Activated CD4-positive, alpha-beta memory T cell treated with anti-CD3 and anti-CD28 coated beads, Interleukin-2, amount 10 ng/mL, durations not matched to agents 7 days and 5 days (primary cell): ENCODE measurements at regions of chr6 and their contacts with region 1.

Region 1: DNA sequence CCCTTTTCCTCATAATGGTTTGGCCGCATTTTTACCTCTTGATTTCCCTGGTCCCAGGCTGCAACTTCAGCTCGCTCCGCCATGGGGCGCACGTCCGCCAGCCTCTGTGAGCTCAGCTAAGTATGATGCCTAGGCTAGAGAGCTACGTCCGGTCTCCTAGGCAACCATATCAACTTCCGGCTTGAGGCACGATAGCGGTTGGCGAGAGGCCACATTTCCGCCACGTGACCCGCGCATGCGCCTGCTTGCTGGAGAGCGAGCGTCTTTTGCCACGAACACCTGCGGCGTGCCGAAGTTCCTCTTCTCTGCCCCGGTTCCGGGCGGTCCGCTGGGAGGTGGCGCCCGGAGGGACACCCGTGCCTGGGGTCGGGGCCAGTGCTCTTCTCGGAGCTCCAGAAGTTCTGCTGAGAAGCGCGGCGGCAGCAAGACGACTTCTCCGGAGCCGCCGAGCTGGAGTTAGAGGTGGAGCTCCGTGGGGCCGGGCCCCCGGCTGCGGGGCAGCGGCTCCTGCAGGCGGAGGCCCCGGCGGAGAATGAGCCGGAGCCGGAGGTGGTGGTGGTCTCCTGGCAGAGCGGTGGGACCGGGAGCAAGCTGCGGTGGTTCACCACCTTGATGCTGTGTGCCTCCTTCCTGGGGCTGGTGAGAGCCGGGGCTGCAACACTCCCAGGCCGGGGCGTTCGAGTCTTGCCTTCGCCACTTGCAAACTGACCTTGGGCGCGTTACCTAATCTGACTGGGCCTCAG is 172.0 kb downstream of the SLC16A10 start:
- DNase-seq: peak; percentile 99
- H3K4me3 Mint-ChIP-seq: peak overlapping the region; percentile 76
- H3K27ac Mint-ChIP-seq: peak overlapping the region; percentile 73
- H3K4me1 Mint-ChIP-seq: peaks cover 31% of the 10 kb centered on the region
- H3K27me3 Mint-ChIP-seq: peaks cover 18% of the 10 kb centered on the region

Region 2: DNA sequence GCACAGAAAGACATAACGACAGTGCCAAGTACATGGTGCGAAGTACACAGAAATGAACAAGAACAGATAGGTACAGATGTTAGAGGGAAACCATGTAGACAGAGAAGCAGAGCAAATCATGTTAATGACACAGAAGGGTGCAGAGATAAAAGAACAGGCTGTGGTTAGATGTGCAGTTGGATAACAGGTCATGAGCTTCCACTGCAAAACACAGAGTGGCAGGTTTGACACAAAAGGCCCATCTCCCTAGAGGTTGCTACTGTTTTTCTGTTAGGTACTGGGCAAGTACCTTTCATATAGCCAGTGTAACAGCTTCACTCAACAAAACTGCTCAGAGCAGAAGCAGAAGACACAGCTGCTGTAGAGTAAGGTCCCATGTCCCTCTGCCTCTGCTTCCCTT is 1652.9 kb before region 1 on chr6:
- CTCF ChIA-PET with region 1: no interaction called
- POLR2A ChIA-PET with region 1: no interaction called
- DNase-seq: no peak
- H3K4me3 Mint-ChIP-seq: no peak overlapping the region
- H3K27ac Mint-ChIP-seq: no peak overlapping the region
- H3K4me1 Mint-ChIP-seq: peaks cover 5% of the 10 kb centered on the region
- H3K27me3 Mint-ChIP-seq: peaks cover 1% of the 10 kb centered on the region

Region 3: GRCh38 chr6:111011360-111012142 is 247.7 kb before region 1 on chr6:
- CTCF ChIA-PET with region 1: interaction called, 13 read pairs
- POLR2A ChIA-PET with region 1: no interaction called
- DNase-seq: no peak
- H3K4me3 Mint-ChIP-seq: no peak overlapping the region
- H3K27ac Mint-ChIP-seq: peak overlapping the region; percentile 7
- H3K4me1 Mint-ChIP-seq: peaks cover 4% of the 10 kb centered on the region
- H3K27me3 Mint-ChIP-seq: no peaks in the 10 kb centered on the region

Region 4: DNA sequence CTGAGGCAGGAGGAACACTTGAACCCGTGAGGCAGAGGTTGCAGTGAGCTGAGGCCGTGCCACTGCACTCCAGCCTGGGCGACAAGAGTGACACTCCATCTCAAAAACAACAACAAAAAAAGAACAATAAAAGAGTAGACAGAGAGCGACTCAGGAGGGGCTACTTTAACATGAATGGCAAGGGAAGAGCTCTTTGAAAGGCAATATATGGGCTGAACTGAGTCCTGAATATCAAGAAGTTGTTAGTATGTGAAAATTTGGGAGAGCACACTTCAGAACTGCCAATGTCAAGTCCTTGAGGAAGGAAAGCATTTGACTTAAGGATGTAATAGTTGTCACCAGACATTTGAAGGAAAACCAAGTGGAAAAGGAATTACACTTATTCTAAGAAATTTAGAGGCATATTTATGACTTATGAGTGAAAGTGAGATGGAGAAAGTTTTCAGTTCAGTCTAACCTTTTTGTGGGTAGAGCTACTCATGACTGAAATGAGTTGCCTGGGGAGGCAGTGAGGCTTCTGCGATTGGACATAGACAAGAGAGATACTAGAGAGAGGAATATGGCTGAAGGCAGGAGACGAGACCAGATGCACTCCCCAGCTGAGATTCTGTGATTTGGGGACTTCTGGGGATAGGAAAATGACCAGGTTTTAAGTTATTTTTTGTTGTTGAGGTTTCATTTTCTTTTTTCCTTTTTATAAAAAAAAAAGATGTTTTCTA is 220.6 kb before region 1 on chr6:
- CTCF ChIA-PET with region 1: no interaction called
- POLR2A ChIA-PET with region 1: no interaction called
- DNase-seq: no peak
- H3K4me3 Mint-ChIP-seq: no peak overlapping the region
- H3K27ac Mint-ChIP-seq: no peak overlapping the region
- H3K4me1 Mint-ChIP-seq: peaks cover 5% of the 10 kb centered on the region
- H3K27me3 Mint-ChIP-seq: peaks cover 7% of the 10 kb centered on the region

Region 5: DNA sequence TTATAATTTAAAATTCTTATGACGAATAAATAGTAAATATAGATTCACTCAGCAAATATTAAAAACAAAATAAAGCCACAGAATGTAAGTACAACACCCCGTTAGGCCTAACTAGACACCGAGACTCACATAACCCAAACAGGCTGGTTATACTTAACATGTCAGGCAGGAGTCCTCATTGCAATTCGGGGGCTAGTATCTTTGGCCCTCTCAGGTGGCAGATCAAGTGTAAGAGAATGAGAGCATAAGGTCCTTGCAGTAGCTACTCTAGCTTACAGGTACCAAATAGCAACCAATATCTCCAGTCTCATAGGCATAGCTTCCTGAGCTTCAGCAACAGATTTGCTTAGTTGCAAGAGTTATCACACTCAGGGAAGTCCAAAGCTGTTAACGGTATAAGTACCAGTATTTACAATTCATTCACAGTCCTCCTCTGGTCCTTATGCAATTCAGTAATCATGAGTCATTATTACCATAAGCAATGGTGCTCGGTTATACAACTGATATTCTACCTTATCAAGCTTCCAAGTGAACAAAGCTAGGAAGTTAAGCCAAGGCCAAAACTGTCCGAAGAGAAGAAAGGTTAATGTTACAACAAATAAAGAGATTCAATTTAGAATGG is 203.6 kb after region 1 on chr6:
- CTCF ChIA-PET with region 1: interaction called, 13 read pairs
- POLR2A ChIA-PET with region 1: interaction called, 5 read pairs
- DNase-seq: no peak
- H3K4me3 Mint-ChIP-seq: no peak overlapping the region
- H3K27ac Mint-ChIP-seq: no peak overlapping the region
- H3K4me1 Mint-ChIP-seq: peaks cover 16% of the 10 kb centered on the region
- H3K27me3 Mint-ChIP-seq: no peaks in the 10 kb centered on the region

Region 6: GRCh38 chr6:111483736-111484632 is 224.7 kb after region 1 on chr6:
- CTCF ChIA-PET with region 1: interaction called, 101 read pairs
- POLR2A ChIA-PET with region 1: interaction called, 40 read pairs
- DNase-seq: peak; percentile 88
- H3K4me3 Mint-ChIP-seq: peak overlapping the region; percentile 95
- H3K27ac Mint-ChIP-seq: peak overlapping the region; percentile 96
- H3K4me1 Mint-ChIP-seq: peaks cover 59% of the 10 kb centered on the region
- H3K27me3 Mint-ChIP-seq: no peaks in the 10 kb centered on the region

Region 7: GRCh38 chr6:111605100-111605751 is 346.0 kb after region 1 on chr6:
- CTCF ChIA-PET with region 1: interaction called, 23 read pairs
- POLR2A ChIA-PET with region 1: interaction called, 19 read pairs
- DNase-seq: peak; percentile 28
- H3K4me3 Mint-ChIP-seq: peak overlapping the region; percentile 82
- H3K27ac Mint-ChIP-seq: peak overlapping the region; percentile 92
- H3K4me1 Mint-ChIP-seq: peaks cover 47% of the 10 kb centered on the region
- H3K27me3 Mint-ChIP-seq: no peaks in the 10 kb centered on the region

Region 8: GRCh38 chr6:112043032-112044007 is 784.1 kb after region 1 on chr6:
- CTCF ChIA-PET with region 1: interaction called, 37 read pairs
- POLR2A ChIA-PET with region 1: interaction called, 15 read pairs
- DNase-seq: peak; percentile 92
- H3K4me3 Mint-ChIP-seq: peak overlapping the region; percentile 95
- H3K27ac Mint-ChIP-seq: peak overlapping the region; percentile 98
- H3K4me1 Mint-ChIP-seq: peaks cover 19% of the 10 kb centered on the region
- H3K27me3 Mint-ChIP-seq: no peaks in the 10 kb centered on the region